IMR-90 (cell line): ENCODE measurements at regions of chr12 and their contacts with region 1.

Region 1: DNA sequence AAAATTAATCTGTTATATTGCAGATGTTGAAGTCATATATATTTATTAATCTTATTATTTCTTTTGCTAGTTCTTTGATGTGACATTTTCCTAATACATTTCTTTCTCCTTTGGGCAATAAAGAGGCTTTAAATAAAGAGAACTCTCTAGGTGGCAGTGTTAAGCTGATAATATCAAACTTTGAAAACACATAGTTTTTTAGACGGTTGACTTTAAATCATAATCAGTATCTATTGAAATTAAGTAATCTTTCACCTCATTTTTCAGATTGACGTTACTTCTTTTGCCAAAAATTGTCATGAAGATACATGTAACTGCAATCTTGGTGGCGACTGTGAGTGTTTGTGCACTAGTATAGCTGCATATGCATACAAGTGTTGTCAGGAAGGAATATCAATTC is 130.8 kb upstream of the PTPRQ start:
- DNase-seq: no peak
- ATAC-seq: no peak
- H3K4me3 ChIP-seq: no peak overlapping the region
- H3K27ac ChIP-seq: no peak overlapping the region
- H3K4me1 ChIP-seq: no peaks in the 10 kb centered on the region
- H3K27me3 ChIP-seq: peaks cover 2% of the 10 kb centered on the region; the same call in 1 of the 2 replicates
- CTCF ChIP-seq: peak; percentile 38
- POLR2A ChIP-seq: no peak
- RAD21 ChIP-seq: 0 out of 2 replicates have a peak, but pooled peaks have one; percentile 9

Region 2: DNA sequence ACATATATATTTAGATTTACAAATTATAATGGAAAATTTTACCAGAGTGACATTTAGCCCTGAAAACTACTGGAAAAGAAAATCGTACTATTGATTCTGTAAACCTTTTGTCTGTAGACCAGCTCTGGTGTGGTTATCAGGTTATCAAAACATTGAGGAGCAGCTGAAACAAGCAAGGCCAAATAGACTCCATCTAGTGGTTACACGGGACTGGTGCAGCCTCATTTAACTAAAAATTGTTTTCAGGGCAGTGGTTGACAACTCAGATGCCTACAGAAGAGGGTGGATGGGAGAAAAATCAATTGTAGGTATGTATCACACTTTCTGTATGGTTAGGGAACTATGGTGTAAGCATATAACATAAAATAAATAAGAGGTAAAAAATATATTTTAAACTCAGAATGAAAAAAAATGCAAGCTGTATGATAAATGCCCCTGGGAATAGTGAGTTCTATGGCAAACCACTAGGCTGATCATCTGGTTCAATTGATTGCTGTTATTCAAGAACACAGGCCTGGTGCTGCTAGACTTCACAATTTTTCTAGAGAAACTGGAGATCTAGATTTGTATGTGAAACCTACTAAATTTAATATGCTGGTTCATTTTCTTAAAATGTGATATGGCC is 815.8 kb after region 1 on chr12:
- CTCF ChIA-PET with region 1: no interaction called
- POLR2A ChIA-PET with region 1: no interaction called
- dilution Hi-C with region 1: no loop called
- in situ Hi-C with region 1: no loop called
- intact Hi-C with region 1: loop called (anchors 5 kb)
- DNase-seq: peak; percentile 43
- ATAC-seq: peak; percentile 87
- H3K4me3 ChIP-seq: no peak overlapping the region
- H3K27ac ChIP-seq: no peak overlapping the region
- H3K4me1 ChIP-seq: no peaks in the 10 kb centered on the region
- H3K27me3 ChIP-seq: no peaks in the 10 kb centered on the region
- CTCF ChIP-seq: peak; percentile 72
- POLR2A ChIP-seq: no peak
- RAD21 ChIP-seq: peak; percentile 47

Region 3: DNA sequence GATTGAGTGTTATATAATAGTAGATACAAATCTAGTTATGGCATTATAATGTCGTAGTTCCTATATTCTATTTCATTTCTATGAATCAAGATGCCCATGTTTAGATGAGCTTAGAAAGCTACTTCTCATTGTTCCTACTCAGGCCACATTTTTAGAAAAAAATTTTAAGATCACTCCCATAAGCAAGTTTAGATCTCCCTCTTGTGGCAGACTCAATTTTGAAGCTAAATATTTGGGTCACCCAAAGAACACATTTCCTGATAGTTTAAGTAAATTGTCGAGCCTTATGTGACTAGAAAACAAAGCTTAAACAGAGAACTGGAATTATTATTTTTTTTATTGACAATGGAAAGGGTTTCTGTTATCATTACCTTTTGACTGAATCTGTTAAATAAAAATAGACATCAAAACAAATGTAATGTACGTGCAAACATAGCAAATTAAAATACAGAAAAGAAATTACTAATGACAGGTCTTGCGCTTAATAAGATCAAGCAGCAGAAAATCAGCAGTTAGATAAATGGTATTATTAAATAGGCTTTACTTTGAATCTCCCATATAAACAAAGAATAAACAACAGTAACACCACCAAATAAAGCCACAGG is 944.8 kb after region 1 on chr12:
- CTCF ChIA-PET with region 1: no interaction called
- POLR2A ChIA-PET with region 1: no interaction called
- dilution Hi-C with region 1: no loop called
- in situ Hi-C with region 1: no loop called
- intact Hi-C with region 1: loop called (anchors 10 kb)
- DNase-seq: peak; percentile 47
- ATAC-seq: peak; percentile 59; the same call in 1 of the 2 replicates
- H3K4me3 ChIP-seq: no peak overlapping the region
- H3K27ac ChIP-seq: no peak overlapping the region
- H3K4me1 ChIP-seq: no peaks in the 10 kb centered on the region
- H3K27me3 ChIP-seq: no peaks in the 10 kb centered on the region
- CTCF ChIP-seq: peak; percentile 55
- POLR2A ChIP-seq: no peak
- RAD21 ChIP-seq: peak; percentile 68